ENCODE measurements at regions of chr11 and their contacts with region 1.

Region 1: DNA sequence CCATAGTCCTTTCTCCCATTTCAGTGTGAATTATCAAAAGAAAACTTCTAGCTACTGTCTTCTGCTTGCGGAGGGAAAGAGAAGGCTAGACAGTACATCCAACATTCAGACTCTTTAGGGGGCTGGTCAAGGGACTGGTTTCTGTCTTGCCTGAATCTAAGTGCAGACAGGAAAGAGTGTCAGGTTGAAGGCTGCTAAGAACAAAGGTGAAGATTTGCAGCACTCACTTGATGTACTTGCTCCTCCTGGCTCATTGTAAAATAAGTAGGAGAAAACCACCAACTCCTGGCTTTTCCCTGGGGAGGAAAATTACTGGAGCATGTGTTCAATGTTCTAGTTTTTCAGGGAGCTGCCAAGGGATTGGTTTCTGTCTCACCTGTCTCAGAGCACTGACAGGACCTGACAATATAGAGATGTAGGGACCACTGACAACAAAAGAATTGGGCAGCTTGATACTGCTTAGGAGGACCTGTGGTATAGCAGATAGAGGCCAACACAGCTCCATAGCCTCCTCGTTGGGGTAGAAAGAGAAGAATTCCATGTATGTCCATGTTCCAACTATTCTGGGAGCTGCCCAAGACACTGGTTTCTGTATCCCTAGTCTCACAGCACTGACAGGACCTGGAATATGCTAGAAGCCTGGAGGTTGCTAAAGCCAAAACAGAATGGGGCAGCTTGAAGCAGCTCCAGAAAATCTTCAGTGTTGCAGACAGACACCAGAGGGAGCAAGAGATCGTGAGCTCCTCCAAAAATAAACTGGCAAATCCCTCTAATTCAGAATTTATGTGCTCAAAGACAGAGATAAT is 39.7 kb upstream of the MMP12 start:
- DNase-seq: peak; percentile 36
- H3K4me3 ChIP-seq: no peak overlapping the region
- CTCF ChIP-seq: peak; percentile 85

Region 2: DNA sequence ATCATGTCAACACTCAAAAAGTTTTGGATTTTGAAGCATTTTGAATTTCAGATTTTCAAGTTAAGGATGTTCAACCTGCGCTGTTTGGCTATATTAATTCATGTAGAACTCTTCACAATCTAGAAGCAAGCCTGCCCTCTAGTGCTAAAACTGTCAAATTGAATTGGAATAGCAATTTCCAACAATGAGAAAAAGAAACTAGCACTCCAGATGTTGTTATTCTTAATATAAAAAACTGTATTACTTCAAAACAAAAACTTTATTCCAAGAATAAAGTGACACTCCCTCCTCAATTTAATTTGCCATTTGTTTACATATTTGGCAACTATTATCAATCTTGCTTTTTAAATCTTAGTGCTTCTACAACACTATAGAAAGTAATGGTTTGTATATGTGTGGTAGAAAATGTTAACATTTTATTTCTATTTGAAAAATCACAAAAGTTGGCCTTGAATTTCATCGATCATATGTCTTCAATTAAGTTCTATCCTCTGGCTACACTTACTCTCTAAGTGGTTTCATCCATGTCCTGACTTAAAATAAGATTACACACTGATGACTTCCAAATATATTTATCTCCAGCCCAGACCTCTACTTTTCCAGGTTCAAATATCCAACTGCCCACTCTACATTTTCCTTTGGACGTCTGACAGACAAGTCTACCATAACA is 140.9 kb after region 1 on chr11:
- in situ Hi-C with region 1: loop called (anchors 25 kb)
- DNase-seq: peak; percentile 35
- H3K4me3 ChIP-seq: no peak overlapping the region
- CTCF ChIP-seq: peak; percentile 53

Measured in astrocyte of the cerebellum (primary cell).